ENCODE measurements at regions of chr2 and their contacts with region 1.

Region 1: DNA sequence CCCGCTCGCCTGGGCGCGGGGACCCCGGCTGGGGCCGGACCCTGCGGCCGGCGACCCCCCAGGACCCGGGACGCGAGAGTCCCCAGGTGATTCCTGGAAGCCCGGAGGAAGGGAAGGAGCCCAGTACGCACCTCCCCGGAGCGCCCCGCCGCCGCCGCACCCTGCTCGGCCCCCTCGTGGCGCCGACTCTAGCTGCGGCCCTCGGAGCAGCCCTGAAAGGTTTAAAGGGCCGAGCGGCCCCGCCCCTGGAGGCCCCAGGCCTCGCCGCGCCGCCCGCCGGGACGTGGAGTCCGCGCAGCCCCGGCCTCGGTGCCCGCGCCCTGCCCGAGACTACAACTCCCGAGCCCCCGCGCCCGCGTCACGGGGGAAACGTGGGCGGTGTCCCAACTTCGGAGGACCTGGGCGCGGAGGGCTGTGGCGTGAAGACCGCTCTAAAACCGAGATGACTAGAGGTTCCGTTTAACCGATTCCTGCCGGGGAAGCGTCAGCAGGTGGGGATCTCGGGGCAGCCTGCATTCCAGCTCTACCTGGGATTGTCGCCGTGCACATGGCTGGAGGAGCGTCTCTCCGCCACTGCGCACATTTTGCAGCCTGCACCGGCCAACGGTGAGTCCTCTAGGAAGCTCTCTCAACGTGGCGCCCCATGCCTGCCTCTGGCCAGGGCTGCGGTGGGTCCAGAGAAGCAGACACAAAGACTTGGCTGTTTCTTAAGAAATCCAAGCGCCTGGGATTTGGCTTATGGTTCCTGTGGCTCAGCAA is at the start of gene TMEM150A:
- DNase-seq: peak; percentile 96 to 99 (median 98)
- ATAC-seq: peak; percentile 96
- H3K4me3 ChIP-seq: peak within 1 kb of the TSS; percentile 88
- H3K27ac ChIP-seq: peak within 1 kb of the TSS; percentile 88
- H3K4me1 ChIP-seq: peaks cover 14% of the 10 kb centered on the region
- H3K27me3 ChIP-seq: no peaks in the 10 kb centered on the region
- total RNA-seq, gene TMEM150A: 14.5 to 17.5 (median 16.5) TPM

Region 2: DNA sequence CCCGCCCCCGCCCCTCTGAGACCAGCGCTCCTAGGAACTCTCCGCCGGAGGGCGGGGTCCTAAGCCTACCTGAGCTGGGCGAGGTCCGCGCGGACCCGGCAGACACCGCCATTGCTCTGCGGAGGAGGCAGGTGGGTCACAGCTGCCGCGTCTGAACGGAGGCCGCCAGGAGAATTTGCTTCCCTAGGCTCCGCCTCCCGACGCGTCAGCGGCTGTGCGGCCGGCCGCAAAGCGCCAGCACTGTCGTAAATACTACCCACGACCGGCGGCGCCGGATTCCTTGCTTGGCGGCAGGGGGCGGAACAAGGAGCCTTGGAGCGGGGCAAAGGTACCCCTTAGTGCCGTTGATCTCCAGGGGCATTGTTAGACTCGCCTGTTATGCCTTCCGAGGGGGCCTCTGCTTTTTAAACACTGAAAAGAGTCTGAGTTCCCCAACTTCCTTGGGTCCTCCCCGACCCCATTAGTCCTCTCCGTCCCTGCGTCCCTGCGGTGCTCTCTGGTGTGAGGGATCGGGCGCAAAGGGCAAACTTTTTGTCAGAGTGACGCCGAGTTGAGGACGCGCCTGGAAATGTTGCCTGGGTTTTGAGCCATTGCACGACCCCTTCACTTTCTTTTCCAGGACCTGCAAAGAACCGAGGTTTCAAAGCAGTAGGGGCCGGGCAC is 41.2 kb before region 1 on chr2 and contains the start of gene GGCX:
- intact Hi-C with region 1: loop called in 2 of 4 experiments (anchors 5 kb)
- DNase-seq: peak; percentile 96 to 99 (median 98)
- ATAC-seq: peak; percentile 92 to 95
- H3K4me3 ChIP-seq: peak within 1 kb of the TSS; percentile 88
- H3K27ac ChIP-seq: peak within 1 kb of the TSS; percentile 88
- H3K4me1 ChIP-seq: no peaks in the 10 kb centered on the region
- H3K27me3 ChIP-seq: no peaks in the 10 kb centered on the region
- total RNA-seq, gene GGCX: 27.7 to 35.8 (median 30.8) TPM

Region 3: DNA sequence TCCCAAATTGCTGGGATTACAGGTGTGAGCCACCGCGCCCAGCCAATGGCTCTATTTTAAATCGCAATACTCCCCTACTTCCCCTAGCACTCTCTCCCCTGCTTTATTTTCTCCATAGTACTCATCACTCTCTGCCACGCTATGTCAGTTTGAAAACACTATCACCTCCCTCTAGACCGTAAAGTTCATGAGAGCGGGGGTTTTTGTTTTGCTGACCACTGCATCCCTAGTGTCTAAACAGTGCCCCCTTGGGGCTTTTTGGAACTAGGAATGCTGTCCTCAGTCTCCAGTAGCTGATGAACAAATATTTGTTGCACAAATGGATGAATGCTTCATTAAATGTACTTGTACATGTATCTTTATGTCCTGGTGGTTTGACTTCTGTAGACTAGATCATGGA is 195.3 kb after region 1 on chr2:
- intact Hi-C with region 1: no loop called
- DNase-seq: no peak
- ATAC-seq: peak; percentile 13 to 43
- H3K4me3 ChIP-seq: no peak overlapping the region
- H3K27ac ChIP-seq: no peak overlapping the region
- H3K4me1 ChIP-seq: peaks cover 33% of the 10 kb centered on the region
- H3K27me3 ChIP-seq: no peaks in the 10 kb centered on the region

Measured in right cardiac atrium (tissue), 5 donors.